ENCODE measurements at regions of chr12 and their contacts with region 1.

Region 1: GRCh38 chr12:56688129-56688845 is at the start of gene PTGES3:
- DNase-seq: peak; percentile 98 to 99 (median 99)
- ATAC-seq: peak; percentile 95
- H3K4me3 ChIP-seq: peak within 1 kb of the TSS; percentile 59
- H3K27ac ChIP-seq: peak within 1 kb of the TSS; percentile 98
- H3K4me1 ChIP-seq: no peaks in the 10 kb centered on the region
- H3K27me3 ChIP-seq: no peaks in the 10 kb centered on the region
- total RNA-seq, gene PTGES3: 127 to 176 (median 150) TPM

Region 2: GRCh38 chr12:56645717-56646446 is 42.4 kb before region 1 on chr12 and contains the start of gene ATP5F1B:
- intact Hi-C with region 1: loop called in 1 of 4 experiments (anchors 5 kb)
- DNase-seq: peak; percentile 96 to 98 (median 97)
- ATAC-seq: peak; percentile 99
- H3K4me3 ChIP-seq: peak within 1 kb of the TSS; percentile 89
- H3K27ac ChIP-seq: peak within 1 kb of the TSS; percentile 97
- H3K4me1 ChIP-seq: no peaks in the 10 kb centered on the region
- H3K27me3 ChIP-seq: no peaks in the 10 kb centered on the region
- total RNA-seq, gene ATP5F1B: 1,684 to 2,029 (median 1,762) TPM

Region 3: DNA sequence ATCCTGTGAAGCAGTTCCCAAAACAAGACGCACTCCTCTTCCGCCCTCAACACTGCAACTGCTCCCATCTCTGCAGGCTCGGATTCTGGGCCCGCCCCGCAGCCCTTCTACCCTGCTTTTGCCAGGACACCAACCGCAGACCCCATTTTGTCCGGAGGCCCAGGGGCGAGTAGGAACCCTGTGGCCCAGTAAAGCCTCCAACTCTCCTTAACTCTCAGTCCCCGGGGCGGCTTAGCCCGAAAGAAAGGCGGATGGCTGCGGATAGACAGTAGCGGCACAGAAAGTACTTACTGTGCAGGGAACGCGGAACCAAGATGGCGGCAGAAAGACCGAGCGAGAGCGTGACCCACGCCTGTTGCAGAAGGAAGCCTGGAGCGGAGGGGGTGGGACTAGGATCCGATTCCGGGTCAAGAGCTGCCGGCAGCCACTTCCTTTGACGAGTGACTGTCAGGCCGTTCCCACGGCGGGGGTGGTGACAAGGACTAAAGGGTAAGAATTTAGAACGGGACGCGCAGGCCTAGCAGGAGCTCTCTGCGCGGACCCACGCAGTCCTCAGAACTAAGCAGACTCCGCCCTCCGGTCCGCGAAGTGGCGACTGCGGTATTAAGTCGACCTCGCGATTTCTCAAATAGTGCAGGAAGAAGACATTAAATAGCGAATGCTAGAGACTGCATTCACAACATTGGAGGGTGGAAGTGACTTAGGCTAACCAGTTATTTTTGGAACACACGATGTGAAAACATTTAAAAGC is 36.9 kb after region 1 on chr12 and contains the start of gene NACA:
- intact Hi-C with region 1: loop called in 2 of 4 experiments (anchors 2 to 5 kb)
- DNase-seq: peak; percentile 99 to 100 (median 99)
- ATAC-seq: peak; percentile 98
- H3K4me3 ChIP-seq: peak within 1 kb of the TSS; percentile 89
- H3K27ac ChIP-seq: peak within 1 kb of the TSS; percentile 92
- H3K4me1 ChIP-seq: peaks cover 19% of the 10 kb centered on the region
- H3K27me3 ChIP-seq: no peaks in the 10 kb centered on the region
- total RNA-seq, gene NACA: 541 to 618 (median 568) TPM

Measured in right cardiac atrium (tissue), 5 donors.